CD4-positive, alpha-beta memory T cell (primary cell): ENCODE measurements at regions of chr14 and their contacts with region 1.

Region 1: GRCh38 chr14:100285021-100285912 is 21.0 kb downstream of the SLC25A29 start:
- DNase-seq: peak; percentile 78 to 83 (median 80)
- H3K4me3 ChIP-seq: peak overlapping the region in 1 of 2 donors; percentile 85
- H3K4me3 Mint-ChIP-seq: peak overlapping the region in 6 of 8 donors; percentile 64 to 83 (median 72)
- H3K27ac ChIP-seq: peak overlapping the region; percentile 83
- H3K27ac Mint-ChIP-seq: peak overlapping the region in 3 of 7 donors; percentile 60 to 83 (median 78)
- H3K4me1 ChIP-seq: peaks cover 13% of the 10 kb centered on the region
- H3K4me1 Mint-ChIP-seq: peaks cover 3 to 16% (median 6%) of the 10 kb centered on the region in 4 donors
- H3K27me3 ChIP-seq: no peaks in the 10 kb centered on the region
- H3K27me3 Mint-ChIP-seq: no peaks in the 10 kb centered on the region

Region 2: GRCh38 chr14:100271247-100271939 is 13.9 kb before region 1 on chr14:
- CTCF ChIA-PET with region 1: interaction called, 38 read pairs
- POLR2A ChIA-PET with region 1: interaction called, 3 read pairs
- intact Hi-C with region 1: no loop called
- DNase-seq: peak in 2 of 5 donors; percentile 17 to 20
- H3K4me3 ChIP-seq: no peak overlapping the region
- H3K4me3 Mint-ChIP-seq: no peak overlapping the region
- H3K27ac ChIP-seq: no peak overlapping the region
- H3K27ac Mint-ChIP-seq: peak overlapping the region in 1 of 7 donors; percentile 48
- H3K4me1 ChIP-seq: peaks cover 61% of the 10 kb centered on the region
- H3K4me1 Mint-ChIP-seq: peaks cover 45 to 72% (median 61%) of the 10 kb centered on the region in 4 donors
- H3K27me3 ChIP-seq: no peaks in the 10 kb centered on the region
- H3K27me3 Mint-ChIP-seq: no peaks in the 10 kb centered on the region

Region 3: GRCh38 chr14:100306420-100307219 is 21.4 kb after region 1 on chr14 and contains the start of gene SLC25A29:
- CTCF ChIA-PET with region 1: no interaction called
- POLR2A ChIA-PET with region 1: no interaction called
- intact Hi-C with region 1: loop called (anchors 2 kb)
- DNase-seq: peak; percentile 52 to 64 (median 57)
- H3K4me3 ChIP-seq: peak within 1 kb of the TSS; percentile 42 to 60
- H3K4me3 Mint-ChIP-seq: peak within 1 kb of the TSS; percentile 82 to 90 (median 84)
- H3K27ac ChIP-seq: peak within 1 kb of the TSS; percentile 46
- H3K27ac Mint-ChIP-seq: peak within 1 kb of the TSS in 2 of 7 donors; percentile 60 to 93
- H3K4me1 ChIP-seq: peaks cover 10% of the 10 kb centered on the region
- H3K4me1 Mint-ChIP-seq: peaks cover 5 to 13% (median 9%) of the 10 kb centered on the region in 4 donors
- H3K27me3 ChIP-seq: no peaks in the 10 kb centered on the region
- H3K27me3 Mint-ChIP-seq: no peaks in the 10 kb centered on the region
- total RNA-seq, gene SLC25A29: 7.9 to 8.1 TPM

Region 4: DNA sequence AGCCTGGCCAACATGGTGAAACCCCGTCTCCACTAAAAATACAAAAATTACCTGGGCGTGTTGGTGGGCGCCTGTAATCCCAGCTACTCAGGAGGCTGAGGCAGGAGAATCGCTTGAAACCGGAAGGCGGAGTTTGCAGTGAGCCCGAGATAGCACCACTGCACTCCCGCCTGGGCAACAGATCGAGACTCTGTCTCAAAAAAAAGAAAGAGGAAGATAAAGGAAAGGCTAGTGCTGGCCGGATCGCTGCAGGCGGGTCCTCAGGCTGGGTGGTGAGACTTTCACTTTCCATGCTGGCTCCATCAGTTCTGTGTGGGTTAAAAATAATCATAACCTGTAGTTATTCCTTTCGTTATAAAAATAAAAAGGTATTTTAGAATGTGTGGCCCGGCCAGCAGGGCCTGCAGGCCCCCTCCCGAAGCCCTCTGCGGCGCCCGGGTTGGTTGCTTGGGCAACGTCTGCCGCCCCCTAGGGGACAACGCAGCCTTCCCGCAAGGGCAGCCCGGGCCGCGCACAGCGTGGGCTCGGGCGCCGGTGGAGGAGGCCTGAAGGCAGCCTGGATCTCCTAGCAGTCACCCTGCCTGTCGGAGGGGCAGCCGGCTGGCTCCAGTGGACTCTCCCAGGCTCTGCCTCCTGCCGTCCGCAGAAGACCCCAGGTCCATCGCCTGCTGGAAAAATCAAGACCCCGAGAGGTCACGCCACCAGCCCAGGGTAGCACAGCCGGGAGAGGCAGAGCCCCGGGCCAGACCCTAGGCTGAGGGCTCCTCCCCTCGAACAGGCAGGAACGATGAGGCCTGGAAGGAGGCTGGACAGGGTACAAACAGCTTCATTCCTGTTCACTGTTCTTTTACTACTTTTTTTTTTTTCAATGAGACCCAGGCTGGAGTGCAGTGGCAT is 32.9 kb after region 1 on chr14:
- CTCF ChIA-PET with region 1: interaction called, 6 read pairs
- POLR2A ChIA-PET with region 1: interaction called, 4 read pairs
- intact Hi-C with region 1: loop called (anchors 1 kb)
- DNase-seq: peak; percentile 56 to 63 (median 59)
- H3K4me3 ChIP-seq: peak overlapping the region in 1 of 2 donors; percentile 38
- H3K4me3 Mint-ChIP-seq: peak overlapping the region; percentile 64 to 83 (median 79)
- H3K27ac ChIP-seq: no peak overlapping the region
- H3K27ac Mint-ChIP-seq: peak overlapping the region in 1 of 7 donors; percentile 55
- H3K4me1 ChIP-seq: peaks cover 4% of the 10 kb centered on the region
- H3K4me1 Mint-ChIP-seq: peaks cover 0 to 5% (median 3%) of the 10 kb centered on the region in 4 donors
- H3K27me3 ChIP-seq: no peaks in the 10 kb centered on the region
- H3K27me3 Mint-ChIP-seq: no peaks in the 10 kb centered on the region

Region 5: DNA sequence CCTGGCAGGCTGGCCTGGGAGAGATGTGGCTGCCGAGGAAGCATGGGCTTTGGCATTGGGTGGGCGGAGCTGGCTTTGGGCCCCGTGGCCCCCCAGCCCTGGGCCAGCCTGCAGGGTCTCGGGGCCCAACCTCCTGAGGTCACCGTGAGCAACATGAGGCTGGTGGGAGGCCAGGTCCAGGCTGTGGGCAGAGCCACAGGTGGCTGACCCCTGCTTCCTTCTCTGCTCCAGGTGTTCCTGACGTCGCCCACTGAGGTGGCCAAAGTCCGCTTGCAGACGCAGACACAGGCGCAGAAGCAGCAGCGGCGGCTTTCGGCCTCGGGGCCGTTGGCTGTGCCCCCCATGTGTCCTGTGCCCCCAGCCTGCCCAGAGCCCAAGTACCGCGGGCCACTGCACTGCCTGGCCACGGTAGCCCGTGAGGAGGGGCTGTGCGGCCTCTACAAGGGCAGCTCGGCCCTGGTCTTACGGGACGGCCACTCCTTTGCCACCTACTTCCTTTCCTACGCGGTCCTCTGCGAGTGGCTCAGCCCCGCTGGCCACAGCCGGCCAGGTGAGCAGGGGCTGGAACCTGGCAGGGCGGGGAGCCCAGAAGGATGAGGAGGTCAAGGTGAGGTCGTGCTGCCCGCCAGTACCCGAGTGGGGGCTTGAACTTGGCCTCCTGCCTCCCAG is 43.4 kb after region 1 on chr14:
- CTCF ChIA-PET with region 1: no interaction called
- POLR2A ChIA-PET with region 1: no interaction called
- intact Hi-C with region 1: no loop called
- DNase-seq: no peak
- H3K4me3 ChIP-seq: no peak overlapping the region
- H3K4me3 Mint-ChIP-seq: no peak overlapping the region
- H3K27ac ChIP-seq: no peak overlapping the region
- H3K27ac Mint-ChIP-seq: no peak overlapping the region
- H3K4me1 ChIP-seq: no peaks in the 10 kb centered on the region
- H3K4me1 Mint-ChIP-seq: no peaks in the 10 kb centered on the region
- H3K27me3 ChIP-seq: no peaks in the 10 kb centered on the region
- H3K27me3 Mint-ChIP-seq: no peaks in the 10 kb centered on the region